ENCODE measurements at regions of chr11 and their contacts with region 1.

Region 1: GRCh38 chr11:64269380-64270234 is 14.9 kb downstream of the BAD start:
- DNase-seq: peak; percentile 98
- H3K4me3 ChIP-seq: peak overlapping the region; percentile 93 to 98
- H3K4me3 Mint-ChIP-seq: peak overlapping the region; percentile 93 to 100 (median 96)
- H3K27ac ChIP-seq: peak overlapping the region; percentile 93
- H3K27ac Mint-ChIP-seq: peak overlapping the region; percentile 98 to 100 (median 99)
- H3K4me1 ChIP-seq: peaks cover 20% of the 10 kb centered on the region
- H3K4me1 Mint-ChIP-seq: peaks cover 9 to 36% (median 19%) of the 10 kb centered on the region in 4 donors
- H3K27me3 ChIP-seq: no peaks in the 10 kb centered on the region
- H3K27me3 Mint-ChIP-seq: peaks cover 0 to 4% of the 10 kb centered on the region in 2 donors

Region 2: GRCh38 chr11:64225612-64226506 is 43.7 kb before region 1 on chr11 and contains the starts of genes NUDT22 and TRPT1:
- CTCF ChIA-PET with region 1: interaction called, 3 read pairs
- POLR2A ChIA-PET with region 1: interaction called, 69 read pairs
- intact Hi-C with region 1: loop called (anchors 1 kb)
- DNase-seq: peak; percentile 82 to 88 (median 85)
- H3K4me3 ChIP-seq: peak within 1 kb of the TSS; percentile 86 to 94
- H3K4me3 Mint-ChIP-seq: peak within 1 kb of the TSS; percentile 89 to 94 (median 92)
- H3K27ac ChIP-seq: peak within 1 kb of the TSS; percentile 77
- H3K27ac Mint-ChIP-seq: peak within 1 kb of the TSS; percentile 88 to 97 (median 93)
- H3K4me1 ChIP-seq: peaks cover 43% of the 10 kb centered on the region
- H3K4me1 Mint-ChIP-seq: peaks cover 13 to 50% (median 28%) of the 10 kb centered on the region in 4 donors
- H3K27me3 ChIP-seq: no peaks in the 10 kb centered on the region
- H3K27me3 Mint-ChIP-seq: no peaks in the 10 kb centered on the region
- total RNA-seq, gene NUDT22: 83.9 to 101 TPM
- total RNA-seq, gene TRPT1: 37.6 to 42.1 TPM

Region 3: GRCh38 chr11:64240394-64241174 is 29.0 kb before region 1 on chr11 and contains the start of gene FKBP2:
- CTCF ChIA-PET with region 1: interaction called, 7 read pairs
- POLR2A ChIA-PET with region 1: interaction called, 289 read pairs
- intact Hi-C with region 1: loop called (anchors 1 kb)
- DNase-seq: peak; percentile 97 to 99 (median 99)
- H3K4me3 ChIP-seq: peak within 1 kb of the TSS; percentile 67 to 73
- H3K4me3 Mint-ChIP-seq: peak within 1 kb of the TSS; percentile 87 to 97 (median 88)
- H3K27ac ChIP-seq: peak within 1 kb of the TSS; percentile 99
- H3K27ac Mint-ChIP-seq: peak within 1 kb of the TSS; percentile 99 to 100 (median 100)
- H3K4me1 ChIP-seq: peaks cover 38% of the 10 kb centered on the region
- H3K4me1 Mint-ChIP-seq: peaks cover 14 to 52% (median 29%) of the 10 kb centered on the region in 4 donors
- H3K27me3 ChIP-seq: no peaks in the 10 kb centered on the region
- H3K27me3 Mint-ChIP-seq: no peaks in the 10 kb centered on the region
- total RNA-seq, gene FKBP2: 41.4 to 46.4 TPM

Region 4: GRCh38 chr11:64246871-64247728 is 22.5 kb before region 1 on chr11 and contains the start of gene PPP1R14B:
- CTCF ChIA-PET with region 1: interaction called, 43 read pairs
- POLR2A ChIA-PET with region 1: interaction called, 289 read pairs
- intact Hi-C with region 1: loop called (anchors 1 kb)
- DNase-seq: peak; percentile 72 to 82 (median 74)
- H3K4me3 ChIP-seq: peak within 1 kb of the TSS; percentile 95 to 98
- H3K4me3 Mint-ChIP-seq: peak within 1 kb of the TSS; percentile 83 to 92 (median 88)
- H3K27ac ChIP-seq: peak within 1 kb of the TSS; percentile 63
- H3K27ac Mint-ChIP-seq: peak within 1 kb of the TSS; percentile 77 to 94 (median 92)
- H3K4me1 ChIP-seq: peaks cover 55% of the 10 kb centered on the region
- H3K4me1 Mint-ChIP-seq: peaks cover 10 to 70% (median 32%) of the 10 kb centered on the region in 4 donors
- H3K27me3 ChIP-seq: no peaks in the 10 kb centered on the region
- H3K27me3 Mint-ChIP-seq: no peaks in the 10 kb centered on the region
- total RNA-seq, gene PPP1R14B: 32.2 to 38.4 TPM

Region 5: GRCh38 chr11:64284048-64284961 is 14.7 kb after region 1 on chr11 and contains the start of gene BAD:
- CTCF ChIA-PET with region 1: interaction called, 21 read pairs
- POLR2A ChIA-PET with region 1: interaction called, 233 read pairs
- intact Hi-C with region 1: loop called (anchors 1 kb)
- DNase-seq: peak; percentile 89 to 94 (median 90)
- H3K4me3 ChIP-seq: peak within 1 kb of the TSS; percentile 93 to 96
- H3K4me3 Mint-ChIP-seq: peak within 1 kb of the TSS; percentile 90 to 93 (median 92)
- H3K27ac ChIP-seq: peak within 1 kb of the TSS; percentile 100
- H3K27ac Mint-ChIP-seq: peak within 1 kb of the TSS; percentile 96 to 99 (median 98)
- H3K4me1 ChIP-seq: peaks cover 24% of the 10 kb centered on the region
- H3K4me1 Mint-ChIP-seq: peaks cover 12 to 48% (median 23%) of the 10 kb centered on the region in 4 donors
- H3K27me3 ChIP-seq: no peaks in the 10 kb centered on the region
- H3K27me3 Mint-ChIP-seq: no peaks in the 10 kb centered on the region
- total RNA-seq, gene BAD: 23.1 to 26.2 TPM

Region 6: DNA sequence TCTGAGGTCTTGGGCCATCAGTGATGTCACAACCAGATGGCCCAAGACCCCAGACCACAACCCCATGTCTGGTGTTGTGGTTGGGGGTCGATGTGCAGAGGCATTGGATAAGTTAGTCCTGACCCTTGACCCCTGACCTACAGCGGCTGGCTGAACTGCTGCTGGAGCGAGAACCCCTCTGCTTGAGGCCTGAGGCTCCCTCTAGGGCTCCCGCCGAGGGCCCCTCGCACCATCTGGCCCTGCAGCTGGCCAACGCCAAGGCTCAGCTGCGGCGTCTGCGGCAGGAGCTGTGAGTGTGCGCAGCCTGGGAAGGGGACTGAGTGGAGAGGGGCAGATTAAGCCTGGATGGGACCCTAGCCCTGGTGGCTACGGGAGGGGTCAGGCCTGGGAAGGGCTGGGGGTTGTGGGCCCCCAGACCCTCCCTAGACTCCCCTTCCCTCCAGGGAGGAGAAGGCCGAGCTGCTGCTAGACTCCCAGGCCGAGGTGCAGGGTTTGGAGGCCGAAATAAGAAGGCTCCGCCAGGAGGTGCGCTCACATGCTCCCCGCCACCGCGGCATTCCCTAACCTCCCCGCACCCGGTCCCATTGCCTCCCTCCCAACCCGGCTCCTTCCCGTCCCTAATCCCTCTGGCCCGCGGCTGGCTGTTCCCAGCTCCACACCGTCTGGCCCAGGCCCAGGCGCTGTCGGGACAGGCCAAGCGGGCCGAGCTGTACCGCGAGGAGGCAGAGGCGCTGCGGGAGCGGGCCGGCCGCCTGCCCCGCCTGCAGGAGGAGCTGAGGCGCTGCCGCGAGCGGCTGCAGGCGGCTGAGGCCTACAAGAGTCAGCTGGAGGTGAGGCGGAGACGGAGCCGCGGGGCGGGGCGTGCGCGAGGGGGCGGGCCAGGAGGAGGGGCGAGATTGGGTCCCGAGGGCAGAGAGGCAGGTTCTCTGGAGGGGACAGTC is 72.5 kb after region 1 on chr11:
- CTCF ChIA-PET with region 1: no interaction called
- POLR2A ChIA-PET with region 1: interaction called, 14 read pairs
- intact Hi-C with region 1: no loop called
- DNase-seq: peak; percentile 87 to 91 (median 89)
- H3K4me3 ChIP-seq: no peak overlapping the region
- H3K4me3 Mint-ChIP-seq: peak overlapping the region in 7 of 8 donors; percentile 39 to 93 (median 63)
- H3K27ac ChIP-seq: peak overlapping the region; percentile 42
- H3K27ac Mint-ChIP-seq: peak overlapping the region in 6 of 7 donors; percentile 48 to 88 (median 76)
- H3K4me1 ChIP-seq: peaks cover 44% of the 10 kb centered on the region
- H3K4me1 Mint-ChIP-seq: peaks cover 21 to 51% (median 36%) of the 10 kb centered on the region in 4 donors
- H3K27me3 ChIP-seq: no peaks in the 10 kb centered on the region
- H3K27me3 Mint-ChIP-seq: no peaks in the 10 kb centered on the region